ENCODE measurements at regions of chr6 and their contacts with region 1.

Region 1: DNA sequence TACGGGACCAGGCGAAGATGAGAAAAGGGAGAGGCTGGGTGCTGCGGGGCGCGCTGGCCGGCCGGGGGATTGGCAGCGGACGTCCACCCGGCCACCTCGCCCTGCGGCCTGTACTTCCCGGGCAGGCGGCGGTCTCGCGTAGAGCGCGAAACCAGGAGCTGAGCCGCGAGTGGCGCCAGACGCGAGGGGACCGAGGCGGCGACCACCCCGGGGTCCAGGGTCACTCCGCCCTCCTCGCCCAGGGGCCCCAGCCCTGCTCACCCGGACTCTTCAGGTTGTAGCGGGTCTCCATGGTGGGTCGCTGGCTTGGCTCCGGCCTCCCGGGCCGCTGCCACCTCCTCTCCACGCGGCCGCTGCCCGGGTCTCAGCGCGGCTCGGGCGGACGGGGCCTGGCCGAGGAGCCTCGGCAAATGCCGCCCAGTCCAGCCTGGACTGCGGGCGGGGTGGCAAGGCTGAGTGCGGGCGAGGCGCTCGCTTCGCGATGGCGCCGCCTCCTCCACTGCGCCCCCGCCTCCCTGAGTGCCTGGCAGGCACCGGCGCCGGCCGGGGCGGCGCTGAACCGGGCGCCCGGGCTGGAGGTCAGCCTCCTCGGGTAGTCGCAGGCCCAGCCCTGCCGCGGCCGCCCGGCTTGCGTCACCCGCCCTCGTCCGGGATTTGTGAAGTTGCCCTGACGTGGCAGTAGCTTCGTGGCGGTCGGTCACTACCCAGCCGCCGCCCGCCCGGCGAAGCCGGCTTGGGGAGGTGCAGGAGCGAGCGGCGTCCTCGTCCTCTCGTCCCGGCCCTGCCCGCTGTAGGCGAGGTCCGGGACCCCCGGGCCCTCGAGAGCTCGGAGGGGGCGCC is at the start of gene UBE2J1:
- DNase-seq: peak; percentile 94
- H3K4me3 Mint-ChIP-seq: peak within 1 kb of the TSS; percentile 91
- H3K27ac Mint-ChIP-seq: peak within 1 kb of the TSS; percentile 94
- H3K4me1 Mint-ChIP-seq: peaks cover 66% of the 10 kb centered on the region
- H3K27me3 Mint-ChIP-seq: no peaks in the 10 kb centered on the region
- total RNA-seq, gene UBE2J1: 31.6 and 33.5 TPM in 2 replicates

Region 2: DNA sequence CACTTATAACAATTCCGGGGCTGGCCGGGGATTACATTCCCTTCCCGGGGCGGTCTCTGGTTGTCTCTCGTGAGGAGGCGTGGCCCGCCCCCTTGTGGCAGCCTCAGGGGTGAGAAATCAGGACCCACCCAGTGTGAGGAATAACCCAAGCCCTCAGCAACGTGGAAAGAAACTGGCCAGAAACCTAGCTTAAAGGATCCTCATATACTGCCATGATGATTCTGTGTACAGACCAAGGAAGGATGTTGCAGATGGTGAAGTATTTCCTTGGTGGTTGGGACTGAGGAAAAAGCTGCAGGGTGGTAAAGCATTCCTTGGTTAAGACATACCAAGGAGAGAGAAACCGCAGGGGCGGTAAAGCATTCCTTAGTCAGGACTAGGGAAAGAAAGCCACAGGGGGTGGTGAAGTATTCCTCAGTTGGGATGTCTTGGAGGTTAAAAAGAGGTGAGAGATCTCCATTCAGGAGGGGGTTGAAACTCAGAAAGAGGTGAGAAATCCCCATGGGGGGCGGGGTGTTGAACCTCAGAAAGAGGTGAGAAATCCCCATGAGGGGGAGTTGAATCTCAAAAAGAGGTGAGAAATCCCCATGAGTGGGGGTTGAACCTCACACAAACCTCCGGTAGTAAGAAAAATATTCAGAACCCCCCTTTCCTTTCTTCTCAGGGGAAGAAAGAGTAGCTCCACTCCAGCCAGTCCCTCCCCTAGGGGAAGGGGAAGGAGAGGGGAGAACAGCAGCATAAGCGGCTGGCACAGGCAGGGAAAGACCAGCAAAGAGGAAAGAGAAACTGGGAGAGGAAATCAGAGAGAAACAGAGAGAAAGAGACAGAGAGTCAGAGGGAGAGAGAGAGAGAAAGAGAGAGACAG is 627.2 kb before region 1 on chr6:
- intact Hi-C with region 1: no loop called
- DNase-seq: no peak
- H3K4me3 Mint-ChIP-seq: peak overlapping the region; percentile 46
- H3K27ac Mint-ChIP-seq: peak overlapping the region; percentile 46
- H3K4me1 Mint-ChIP-seq: peaks cover 16% of the 10 kb centered on the region
- H3K27me3 Mint-ChIP-seq: no peaks in the 10 kb centered on the region

Region 3: DNA sequence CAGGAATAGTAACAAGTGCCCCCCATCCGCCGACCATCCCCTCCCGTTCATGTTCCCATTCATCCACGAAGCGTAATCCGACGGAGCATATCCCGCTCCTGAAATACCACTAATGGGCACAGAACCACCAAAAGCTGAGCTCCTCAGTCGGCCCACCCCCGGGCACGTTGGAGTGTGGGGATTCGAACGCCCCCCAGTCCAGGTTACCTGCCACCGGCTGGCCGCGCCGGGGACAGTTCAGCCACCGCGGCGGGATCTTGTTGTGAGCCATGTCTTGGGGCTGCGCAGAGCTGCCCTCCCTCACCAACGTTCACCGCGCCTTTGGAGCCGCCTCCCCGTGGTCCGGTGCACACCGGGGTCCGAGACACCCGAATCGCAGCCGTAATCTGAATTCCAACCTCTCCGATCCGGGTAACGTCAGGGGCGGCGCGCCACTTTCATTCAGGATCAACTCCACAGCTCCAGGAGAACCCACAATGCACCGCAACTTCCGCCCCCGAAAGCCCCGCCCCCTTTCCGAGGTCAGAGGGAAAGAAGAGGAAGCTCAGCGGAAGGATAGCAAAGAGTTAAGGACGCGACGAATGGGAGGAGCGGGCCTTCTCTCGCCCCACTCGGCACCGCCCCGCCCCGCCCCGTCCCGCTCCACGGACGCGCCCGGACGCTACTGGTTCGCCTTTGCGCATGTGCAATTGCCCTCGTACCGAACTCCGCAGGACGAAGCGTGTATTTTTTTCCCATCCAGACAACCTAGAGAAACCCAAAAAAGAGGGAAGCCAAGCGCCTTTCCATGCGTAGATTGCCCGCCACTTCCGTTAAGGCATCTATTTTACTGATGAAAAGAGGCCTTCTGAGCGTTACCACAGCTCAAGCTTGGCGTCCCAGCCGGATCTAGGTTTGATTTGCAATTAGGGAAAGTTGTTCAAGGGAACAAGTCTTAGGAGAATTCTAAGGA is 389.1 kb before region 1 on chr6 and contains the start of gene RNGTT:
- intact Hi-C with region 1: loop called (anchors 2 kb)
- DNase-seq: peak; percentile 99
- H3K4me3 Mint-ChIP-seq: peak within 1 kb of the TSS; percentile 98
- H3K27ac Mint-ChIP-seq: peak within 1 kb of the TSS; percentile 94
- H3K4me1 Mint-ChIP-seq: peaks cover 25% of the 10 kb centered on the region
- H3K27me3 Mint-ChIP-seq: peaks cover 4% of the 10 kb centered on the region
- total RNA-seq, gene RNGTT: 23.8 and 25.9 TPM in 2 replicates

Region 4: GRCh38 chr6:89145787-89146646 is 206.5 kb before region 1 on chr6 and contains the start of gene PM20D2:
- intact Hi-C with region 1: loop called (anchors 2 kb)
- DNase-seq: peak; percentile 90
- H3K4me3 Mint-ChIP-seq: peak within 1 kb of the TSS; percentile 91
- H3K27ac Mint-ChIP-seq: peak within 1 kb of the TSS; percentile 98
- H3K4me1 Mint-ChIP-seq: peaks cover 26% of the 10 kb centered on the region
- H3K27me3 Mint-ChIP-seq: peaks cover 12% of the 10 kb centered on the region
- total RNA-seq, gene PM20D2: 18.3 and 18.9 TPM in 2 replicates

Region 5: DNA sequence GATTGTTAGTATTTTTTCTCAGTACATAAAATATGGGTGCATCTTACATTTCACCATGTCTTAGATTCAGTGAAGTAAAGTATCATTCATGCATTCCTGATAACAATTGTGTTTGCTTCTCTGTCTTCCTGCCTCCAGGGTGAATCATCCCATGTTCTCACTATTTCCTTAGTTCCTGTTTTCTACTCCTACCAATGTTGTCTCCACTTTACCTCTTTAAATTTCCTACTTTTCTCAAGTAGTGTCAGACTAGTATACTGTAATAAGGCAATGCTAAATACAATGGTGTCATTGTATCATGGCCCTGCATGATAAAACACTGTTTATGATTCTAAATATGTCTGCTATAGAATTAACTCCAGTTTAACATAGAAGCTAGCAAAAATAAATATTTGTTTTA is 97.9 kb before region 1 on chr6:
- intact Hi-C with region 1: no loop called
- DNase-seq: no peak
- H3K4me3 Mint-ChIP-seq: no peak overlapping the region
- H3K27ac Mint-ChIP-seq: no peak overlapping the region
- H3K4me1 Mint-ChIP-seq: peaks cover 2% of the 10 kb centered on the region
- H3K27me3 Mint-ChIP-seq: peaks cover 9% of the 10 kb centered on the region

Region 6: GRCh38 chr6:89297695-89298351 is 54.7 kb before region 1 on chr6:
- intact Hi-C with region 1: loop called (anchors 1 kb)
- DNase-seq: peak; percentile 90
- H3K4me3 Mint-ChIP-seq: peak overlapping the region; percentile 56
- H3K27ac Mint-ChIP-seq: peak overlapping the region; percentile 86
- H3K4me1 Mint-ChIP-seq: peaks cover 22% of the 10 kb centered on the region
- H3K27me3 Mint-ChIP-seq: no peaks in the 10 kb centered on the region

Region 7: DNA sequence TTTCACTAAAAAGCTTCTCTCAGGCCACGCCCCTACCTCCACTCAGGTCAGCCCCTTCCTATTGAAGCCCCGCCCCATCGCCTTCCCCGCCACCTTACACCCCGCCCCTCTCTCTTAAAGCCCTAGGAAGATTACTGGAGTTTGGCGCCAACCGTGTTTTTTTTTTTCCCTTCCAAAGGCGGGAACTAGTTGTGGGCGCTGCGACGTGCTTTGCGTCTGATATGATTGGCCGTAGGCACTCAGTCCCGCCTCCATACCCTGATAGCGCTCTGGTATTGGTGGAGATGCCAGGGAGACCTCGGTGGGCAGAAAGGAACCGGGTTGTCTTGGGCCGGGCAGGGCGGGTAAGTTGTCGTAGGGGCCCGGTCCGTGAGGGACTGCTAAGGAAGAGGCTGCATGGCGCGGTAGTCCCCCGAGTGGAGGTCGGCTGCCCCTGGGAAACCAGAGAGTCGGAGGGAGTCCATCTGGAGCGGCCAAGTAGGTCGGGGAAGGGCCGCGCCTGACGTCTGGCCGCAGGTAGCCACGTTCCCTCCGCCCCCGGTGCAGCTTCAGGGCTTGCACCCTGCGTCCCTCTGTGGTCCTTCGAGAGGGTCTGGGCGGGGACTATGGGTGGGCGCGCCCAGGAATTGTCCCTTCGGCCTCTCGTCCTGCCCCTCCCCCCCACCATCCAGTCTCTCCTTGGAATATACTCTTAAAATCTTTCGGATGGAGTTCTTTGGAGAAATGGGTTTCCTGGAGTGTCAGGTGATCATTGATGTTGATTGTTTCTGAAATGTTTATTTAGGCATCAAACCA is 477.3 kb after region 1 on chr6 and contains the start of gene CASP8AP2:
- intact Hi-C with region 1: loop called (anchors 5 kb)
- DNase-seq: peak; percentile 98
- H3K4me3 Mint-ChIP-seq: peak within 1 kb of the TSS; percentile 99
- H3K27ac Mint-ChIP-seq: peak within 1 kb of the TSS; percentile 98
- H3K4me1 Mint-ChIP-seq: peaks cover 25% of the 10 kb centered on the region
- H3K27me3 Mint-ChIP-seq: no peaks in the 10 kb centered on the region
- total RNA-seq, gene CASP8AP2: 37.3 and 37.8 TPM in 2 replicates